Activated B cell treated with CpG ODN at 0.5 μM for 24 hours (primary cell): ENCODE measurements at regions of chr11 and their contacts with region 1.

Region 1: GRCh38 chr11:108216988-108217387 is 5.5 kb downstream of the NPAT start:
- DNase-seq: no peak
- ATAC-seq: no peak
- H3K4me3 Mint-ChIP-seq: no peak overlapping the region
- H3K27ac Mint-ChIP-seq: no peak overlapping the region
- H3K4me1 Mint-ChIP-seq: peaks cover 66% of the 10 kb centered on the region
- H3K27me3 Mint-ChIP-seq: no peaks in the 10 kb centered on the region
- CTCF ChIP-seq: no peak

Region 2: DNA sequence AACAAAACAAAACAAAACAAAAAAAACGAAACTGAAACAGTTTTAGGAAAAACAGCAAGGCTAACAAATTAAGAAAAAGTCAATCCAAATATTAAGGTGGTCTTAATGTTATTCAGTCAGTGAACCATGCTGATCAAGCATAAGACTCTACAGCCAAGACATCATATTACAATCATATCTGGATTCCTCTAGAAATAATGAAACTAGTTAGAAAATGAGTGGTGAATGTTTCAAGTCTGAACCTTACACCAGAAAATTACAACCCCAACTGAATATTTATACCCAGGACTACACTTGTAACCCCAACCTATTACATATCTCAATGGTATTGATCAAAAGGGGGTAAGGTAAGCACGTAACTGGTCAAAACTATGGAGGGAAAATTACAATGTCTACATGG is 46.8 kb before region 1 on chr11:
- CTCF ChIA-PET with region 1: no interaction called
- POLR2A ChIA-PET with region 1: interaction called, 10 read pairs
- intact Hi-C with region 1: no loop called
- DNase-seq: no peak
- ATAC-seq: no peak
- H3K4me3 Mint-ChIP-seq: no peak overlapping the region
- H3K27ac Mint-ChIP-seq: peak overlapping the region; percentile 19
- H3K4me1 Mint-ChIP-seq: peaks cover 20% of the 10 kb centered on the region
- H3K27me3 Mint-ChIP-seq: no peaks in the 10 kb centered on the region
- CTCF ChIP-seq: no peak

Region 3: DNA sequence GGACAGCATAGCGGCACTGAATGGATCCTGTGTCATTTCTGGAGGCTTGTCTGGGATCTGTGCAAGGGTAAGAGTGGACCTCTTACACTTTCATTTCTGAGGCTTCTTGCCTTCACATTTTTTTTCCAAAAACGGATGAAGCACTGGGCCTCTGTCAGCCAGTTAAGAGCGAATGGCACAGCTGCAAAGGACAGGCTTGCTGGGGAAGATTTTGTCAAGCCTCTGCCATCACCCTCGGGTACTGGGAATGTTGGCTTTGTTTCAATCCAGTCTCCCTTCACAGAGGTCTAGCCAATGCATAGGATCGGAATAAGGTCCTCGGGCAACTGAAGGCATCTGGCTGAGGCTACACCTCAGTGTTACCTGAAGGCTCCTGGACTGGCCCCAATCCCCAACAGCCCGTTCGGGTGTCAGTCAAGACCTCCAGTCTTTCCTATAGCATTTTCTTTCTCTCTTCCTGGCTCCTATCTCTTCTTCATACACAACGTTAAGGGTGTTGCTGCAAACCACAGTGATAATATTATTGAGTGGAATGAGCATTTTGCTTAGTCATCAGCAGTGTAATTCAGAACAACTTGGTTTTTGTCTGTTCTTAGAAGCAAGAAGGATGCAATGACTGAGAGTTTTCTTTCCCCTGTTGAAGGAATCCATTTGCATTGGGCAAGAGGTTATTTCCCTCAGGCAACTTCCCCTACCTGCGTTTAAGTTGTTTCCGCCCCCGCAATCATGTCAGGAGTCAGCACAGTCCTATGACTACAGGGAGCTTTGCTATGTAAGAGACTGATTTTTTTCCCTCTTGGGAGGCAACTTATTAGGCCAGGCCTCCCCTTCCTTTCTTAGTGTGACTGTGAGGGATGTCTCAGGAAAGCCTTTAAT is 17.3 kb before region 1 on chr11:
- CTCF ChIA-PET with region 1: no interaction called
- POLR2A ChIA-PET with region 1: interaction called, 19 read pairs
- intact Hi-C with region 1: loop called (anchors 1 kb)
- DNase-seq: no peak
- ATAC-seq: peak; percentile 91
- H3K4me3 Mint-ChIP-seq: peak overlapping the region; percentile 9
- H3K27ac Mint-ChIP-seq: peak overlapping the region; percentile 69
- H3K4me1 Mint-ChIP-seq: peaks cover 74% of the 10 kb centered on the region
- H3K27me3 Mint-ChIP-seq: no peaks in the 10 kb centered on the region
- CTCF ChIP-seq: no peak

Region 4: GRCh38 chr11:108559340-108559739 is 342.4 kb after region 1 on chr11:
- CTCF ChIA-PET with region 1: no interaction called
- POLR2A ChIA-PET with region 1: no interaction called
- intact Hi-C with region 1: no loop called
- DNase-seq: no peak
- ATAC-seq: no peak
- H3K4me3 Mint-ChIP-seq: no peak overlapping the region
- H3K27ac Mint-ChIP-seq: no peak overlapping the region
- H3K4me1 Mint-ChIP-seq: no peaks in the 10 kb centered on the region
- H3K27me3 Mint-ChIP-seq: peaks cover 9% of the 10 kb centered on the region
- CTCF ChIP-seq: no peak

Region 5: DNA sequence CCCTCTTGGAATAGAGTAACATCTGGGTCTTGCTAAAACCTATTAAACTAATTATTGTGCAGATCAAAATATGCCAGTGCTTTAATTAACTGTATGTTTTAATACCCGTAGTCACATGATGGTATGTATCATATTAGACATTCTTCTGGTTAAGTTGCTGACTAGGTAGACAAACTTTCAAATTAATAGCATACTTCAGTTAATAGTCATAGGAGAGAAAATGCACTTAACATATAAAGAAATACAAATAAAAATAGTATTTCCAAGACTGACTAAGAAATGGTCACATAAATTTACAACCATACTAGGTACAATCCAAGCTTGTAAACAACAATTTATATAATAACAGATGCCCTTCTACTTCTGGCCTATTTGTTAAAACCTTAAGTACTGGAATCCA is 384.2 kb after region 1 on chr11:
- CTCF ChIA-PET with region 1: no interaction called
- POLR2A ChIA-PET with region 1: no interaction called
- intact Hi-C with region 1: no loop called
- DNase-seq: no peak
- ATAC-seq: no peak
- H3K4me3 Mint-ChIP-seq: no peak overlapping the region
- H3K27ac Mint-ChIP-seq: no peak overlapping the region
- H3K4me1 Mint-ChIP-seq: no peaks in the 10 kb centered on the region
- H3K27me3 Mint-ChIP-seq: peaks cover 38% of the 10 kb centered on the region
- CTCF ChIP-seq: no peak